Activated CD8-positive, alpha-beta memory T cell treated with anti-CD3 and anti-CD28 coated beads, Interleukin-2, amount 10 ng/mL, durations not matched to agents 7 days and 5 days (primary cell): ENCODE measurements at regions of chr9 and their contacts with region 1.

Region 1: DNA sequence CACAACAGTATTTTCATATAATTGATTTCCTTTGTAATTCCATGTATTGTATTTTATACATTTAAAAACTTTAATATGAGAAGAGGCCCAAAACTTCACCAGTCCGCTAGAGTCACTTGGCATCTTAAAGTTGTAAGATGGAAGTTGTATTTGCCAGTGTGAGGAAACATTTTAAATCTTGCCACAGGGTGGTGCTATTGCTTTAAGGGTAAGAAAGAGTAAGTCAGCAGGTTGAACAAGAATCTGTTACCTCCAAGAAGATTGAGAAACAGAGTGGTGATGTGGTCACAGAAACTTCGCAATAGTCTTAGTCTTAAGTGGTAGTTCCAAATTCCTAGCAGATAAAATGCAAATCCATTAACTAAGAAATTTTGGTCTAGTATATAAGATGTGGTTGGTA is 39.8 kb upstream of the RANBP6 start:
- DNase-seq: peak; percentile 61
- ATAC-seq: peak; percentile 73
- H3K4me3 Mint-ChIP-seq: no peak overlapping the region
- H3K27ac Mint-ChIP-seq: no peak overlapping the region
- H3K4me1 Mint-ChIP-seq: peaks cover 2% of the 10 kb centered on the region
- H3K27me3 Mint-ChIP-seq: peaks cover 11% of the 10 kb centered on the region

Region 2: DNA sequence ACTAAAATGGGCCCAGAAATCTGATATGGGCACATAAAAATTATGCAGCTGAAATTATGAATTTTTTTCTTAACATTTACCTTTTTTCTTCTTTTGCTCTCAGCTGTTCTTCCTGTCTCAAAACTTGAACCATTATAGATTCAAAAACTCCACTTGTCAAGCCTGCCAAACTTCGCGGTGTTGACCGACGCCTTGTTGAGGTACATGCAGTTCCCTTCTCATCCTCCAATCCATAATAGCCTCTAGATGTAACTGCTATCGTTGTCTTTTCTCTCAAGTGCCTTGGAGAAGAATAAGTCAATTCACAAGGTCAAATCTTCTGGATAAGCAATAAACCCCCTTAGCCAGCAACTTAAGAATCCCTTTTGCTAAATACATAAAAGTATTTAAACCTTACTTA is 66.9 kb before region 1 on chr9:
- CTCF ChIA-PET with region 1: no interaction called
- DNase-seq: no peak
- ATAC-seq: no peak
- H3K4me3 Mint-ChIP-seq: no peak overlapping the region
- H3K27ac Mint-ChIP-seq: no peak overlapping the region
- H3K4me1 Mint-ChIP-seq: peaks cover 2% of the 10 kb centered on the region
- H3K27me3 Mint-ChIP-seq: no peaks in the 10 kb centered on the region

Region 3: DNA sequence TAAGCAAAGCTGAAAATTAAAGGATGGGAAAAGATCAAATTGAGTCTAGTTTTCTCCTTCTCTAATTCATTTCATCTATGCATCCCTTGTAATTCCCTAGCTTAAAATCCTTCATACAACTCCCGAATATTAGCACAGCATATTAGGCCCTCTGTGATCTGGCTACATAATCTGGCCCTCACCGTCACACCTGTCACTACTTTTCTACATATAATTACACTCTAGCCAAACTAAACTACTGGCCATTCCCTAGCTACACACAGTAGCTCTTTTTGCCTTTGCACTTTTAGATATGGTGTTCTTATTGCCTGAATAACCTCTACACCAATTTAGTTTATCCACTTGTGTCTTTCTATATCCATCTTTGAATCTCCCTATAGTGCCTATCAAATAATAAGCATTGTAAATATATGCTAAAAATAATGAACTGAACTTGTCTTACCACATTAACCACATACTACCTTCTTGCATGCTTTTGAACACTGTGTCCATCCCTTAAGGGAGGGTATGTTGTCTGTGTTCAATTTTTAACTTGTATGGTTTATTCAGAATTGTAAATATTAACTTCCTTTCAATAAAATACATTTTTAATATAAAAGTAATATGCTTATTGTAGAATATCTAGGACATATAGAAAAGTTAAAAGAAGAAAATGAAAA is 55.6 kb before region 1 on chr9:
- CTCF ChIA-PET with region 1: no interaction called
- DNase-seq: no peak
- ATAC-seq: no peak
- H3K4me3 Mint-ChIP-seq: no peak overlapping the region
- H3K27ac Mint-ChIP-seq: no peak overlapping the region
- H3K4me1 Mint-ChIP-seq: peaks cover 33% of the 10 kb centered on the region
- H3K27me3 Mint-ChIP-seq: no peaks in the 10 kb centered on the region

Region 4: GRCh38 chr9:6024020-6024554 is 31.1 kb before region 1 on chr9:
- CTCF ChIA-PET with region 1: interaction called, 10 read pairs
- DNase-seq: peak; percentile 49
- ATAC-seq: peak; percentile 73
- H3K4me3 Mint-ChIP-seq: no peak overlapping the region
- H3K27ac Mint-ChIP-seq: no peak overlapping the region
- H3K4me1 Mint-ChIP-seq: peaks cover 6% of the 10 kb centered on the region
- H3K27me3 Mint-ChIP-seq: peaks cover 12% of the 10 kb centered on the region

Region 5: DNA sequence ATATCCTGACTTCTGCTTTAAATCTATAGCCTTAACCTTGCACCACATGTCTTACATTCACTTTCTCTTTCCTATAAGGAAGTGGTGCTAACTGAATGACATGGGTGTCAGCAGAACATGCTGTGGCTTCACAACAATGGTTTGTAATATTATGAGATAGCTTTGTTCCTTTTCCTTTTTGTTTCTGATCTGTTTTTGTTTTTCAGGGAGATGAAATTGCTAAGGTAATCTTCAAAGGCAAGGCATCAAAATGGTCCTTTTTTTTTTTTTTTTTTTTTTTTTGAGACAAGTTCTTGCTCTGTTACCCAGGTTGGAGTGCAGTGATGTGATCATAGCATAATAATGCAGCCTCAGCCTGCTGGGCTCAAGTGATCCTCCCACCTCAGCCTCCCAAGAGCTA is 13.8 kb after region 1 on chr9:
- CTCF ChIA-PET with region 1: interaction called, 14 read pairs
- DNase-seq: peak; percentile 58
- ATAC-seq: peak; percentile 99
- H3K4me3 Mint-ChIP-seq: peak overlapping the region; percentile 20
- H3K27ac Mint-ChIP-seq: peak overlapping the region; percentile 78
- H3K4me1 Mint-ChIP-seq: peaks cover 19% of the 10 kb centered on the region
- H3K27me3 Mint-ChIP-seq: no peaks in the 10 kb centered on the region

Region 6: DNA sequence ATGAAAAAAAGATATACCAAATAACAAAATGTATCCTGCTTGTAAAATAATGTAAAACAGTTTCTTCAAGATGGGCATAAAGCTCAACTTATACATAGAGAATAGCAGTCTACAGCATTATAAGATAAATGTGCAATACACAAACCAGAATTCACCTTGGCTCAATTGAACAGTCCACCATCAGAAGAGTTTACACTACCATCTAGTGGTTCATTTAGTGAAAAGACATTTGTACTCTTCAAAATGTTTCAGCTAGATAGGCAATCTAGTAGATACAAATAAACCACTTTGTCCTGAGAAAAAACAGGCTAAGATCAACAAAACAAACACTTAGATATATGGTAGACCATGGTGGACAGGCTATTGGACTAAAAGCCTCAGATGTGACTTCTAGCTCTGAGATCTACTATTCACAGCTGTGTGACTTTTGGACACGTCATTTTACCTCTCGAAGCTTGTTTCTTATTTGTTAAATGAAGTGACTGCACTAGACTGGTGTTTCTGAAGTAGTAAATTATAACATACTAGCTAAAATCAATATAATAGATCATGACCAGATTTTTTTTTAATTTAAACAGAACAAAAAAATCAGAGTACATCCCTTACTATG is 250.8 kb after region 1 on chr9:
- CTCF ChIA-PET with region 1: interaction called, 17 read pairs
- DNase-seq: no peak
- ATAC-seq: no peak
- H3K4me3 Mint-ChIP-seq: no peak overlapping the region
- H3K27ac Mint-ChIP-seq: no peak overlapping the region
- H3K4me1 Mint-ChIP-seq: no peaks in the 10 kb centered on the region
- H3K27me3 Mint-ChIP-seq: peaks cover 35% of the 10 kb centered on the region

Region 7: GRCh38 chr9:6566409-6567139 is 511.4 kb after region 1 on chr9:
- CTCF ChIA-PET with region 1: interaction called, 12 read pairs
- DNase-seq: peak; percentile 61
- ATAC-seq: peak; percentile 83
- H3K4me3 Mint-ChIP-seq: no peak overlapping the region
- H3K27ac Mint-ChIP-seq: peak overlapping the region; percentile 78
- H3K4me1 Mint-ChIP-seq: peaks cover 13% of the 10 kb centered on the region
- H3K27me3 Mint-ChIP-seq: peaks cover 7% of the 10 kb centered on the region